B cell (primary cell): ENCODE measurements at regions of chr10 and their contacts with region 1.

Region 1: GRCh38 chr10:124074501-124075109 is 18.8 kb downstream of the CHST15 start:
- DNase-seq: peak; percentile 59
- ATAC-seq: peak; percentile 60
- H3K4me3 ChIP-seq: peak overlapping the region in 2 of 5 experiments; percentile 8 to 41
- H3K4me3 Mint-ChIP-seq: peak overlapping the region; percentile 66
- H3K27ac ChIP-seq: peak overlapping the region; percentile 3 to 45
- H3K27ac Mint-ChIP-seq: peak overlapping the region; percentile 78
- H3K4me1 ChIP-seq: peaks cover 75 to 87% of the 10 kb centered on the region in 2 donors
- H3K4me1 Mint-ChIP-seq: peaks cover 82% of the 10 kb centered on the region
- H3K27me3 ChIP-seq: no peaks in the 10 kb centered on the region
- H3K27me3 Mint-ChIP-seq: no peaks in the 10 kb centered on the region
- CTCF ChIP-seq: no peak

Region 2: GRCh38 chr10:123945325-123945920 is 129.2 kb before region 1 on chr10:
- CTCF ChIA-PET with region 1: no interaction called
- POLR2A ChIA-PET with region 1: no interaction called
- intact Hi-C with region 1: no loop called
- DNase-seq: no peak
- ATAC-seq: no peak
- H3K4me3 ChIP-seq: no peak overlapping the region
- H3K4me3 Mint-ChIP-seq: no peak overlapping the region
- H3K27ac ChIP-seq: no peak overlapping the region
- H3K27ac Mint-ChIP-seq: no peak overlapping the region
- H3K4me1 ChIP-seq: no peaks in the 10 kb centered on the region
- H3K4me1 Mint-ChIP-seq: no peaks in the 10 kb centered on the region
- H3K27me3 ChIP-seq: peaks cover 0 to 5% (median 0%) of the 10 kb centered on the region in 4 experiments
- H3K27me3 Mint-ChIP-seq: peaks cover 29% of the 10 kb centered on the region
- CTCF ChIP-seq: no peak

Region 3: GRCh38 chr10:124356701-124357562 is 282.3 kb after region 1 on chr10:
- CTCF ChIA-PET with region 1: no interaction called
- POLR2A ChIA-PET with region 1: interaction called, 10 read pairs
- intact Hi-C with region 1: no loop called
- DNase-seq: no peak
- ATAC-seq: no peak
- H3K4me3 ChIP-seq: no peak overlapping the region
- H3K4me3 Mint-ChIP-seq: no peak overlapping the region
- H3K27ac ChIP-seq: no peak overlapping the region
- H3K27ac Mint-ChIP-seq: no peak overlapping the region
- H3K4me1 ChIP-seq: peaks cover 8 to 9% of the 10 kb centered on the region in 2 donors
- H3K4me1 Mint-ChIP-seq: peaks cover 11% of the 10 kb centered on the region
- H3K27me3 ChIP-seq: peaks cover 0 to 2% (median 0%) of the 10 kb centered on the region in 4 experiments
- H3K27me3 Mint-ChIP-seq: peaks cover 3% of the 10 kb centered on the region
- CTCF ChIP-seq: no peak

Region 4: GRCh38 chr10:126013489-126014281 is 1939.1 kb after region 1 on chr10:
- CTCF ChIA-PET with region 1: no interaction called
- POLR2A ChIA-PET with region 1: no interaction called
- intact Hi-C with region 1: no loop called
- DNase-seq: no peak
- ATAC-seq: no peak
- H3K4me3 ChIP-seq: no peak overlapping the region
- H3K4me3 Mint-ChIP-seq: no peak overlapping the region
- H3K27ac ChIP-seq: no peak overlapping the region
- H3K27ac Mint-ChIP-seq: no peak overlapping the region
- H3K4me1 ChIP-seq: no peaks in the 10 kb centered on the region
- H3K4me1 Mint-ChIP-seq: peaks cover 3% of the 10 kb centered on the region
- H3K27me3 ChIP-seq: no peaks in the 10 kb centered on the region
- H3K27me3 Mint-ChIP-seq: no peaks in the 10 kb centered on the region
- CTCF ChIP-seq: no peak